ENCODE measurements at regions of chr15 and their contacts with region 1.

Region 1: DNA sequence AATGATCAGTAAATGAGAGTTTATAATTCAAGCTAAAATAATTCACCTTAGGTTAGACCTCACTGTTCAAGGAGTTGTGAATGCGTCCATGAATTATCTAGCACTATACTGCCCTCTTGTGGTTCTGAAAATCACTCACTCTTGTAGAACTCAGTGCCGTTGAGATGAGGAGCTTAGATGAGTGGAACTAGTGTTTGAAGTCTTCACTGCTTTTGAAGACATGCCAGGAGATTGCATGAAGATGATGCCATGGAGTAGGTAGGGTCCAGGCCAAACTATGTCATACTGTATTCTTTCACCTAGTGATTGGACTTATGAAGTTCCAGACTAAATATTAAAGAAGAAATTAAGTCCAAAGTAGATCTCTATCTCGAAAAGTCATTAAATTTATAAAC is 28.8 kb downstream of the LYSMD4 start:
- DNase-seq: no peak
- H3K4me3 ChIP-seq: no peak overlapping the region
- CTCF ChIP-seq: peak; percentile 60

Region 2: GRCh38 chr15:99250494-99251435 is 453.7 kb before region 1 on chr15:
- CTCF ChIA-PET with region 1: interaction called, 15 read pairs
- POLR2A ChIA-PET with region 1: interaction called, 3 read pairs
- DNase-seq: peak; percentile 88
- H3K4me3 ChIP-seq: peak overlapping the region; percentile 86
- CTCF ChIP-seq: no peak

Region 3: DNA sequence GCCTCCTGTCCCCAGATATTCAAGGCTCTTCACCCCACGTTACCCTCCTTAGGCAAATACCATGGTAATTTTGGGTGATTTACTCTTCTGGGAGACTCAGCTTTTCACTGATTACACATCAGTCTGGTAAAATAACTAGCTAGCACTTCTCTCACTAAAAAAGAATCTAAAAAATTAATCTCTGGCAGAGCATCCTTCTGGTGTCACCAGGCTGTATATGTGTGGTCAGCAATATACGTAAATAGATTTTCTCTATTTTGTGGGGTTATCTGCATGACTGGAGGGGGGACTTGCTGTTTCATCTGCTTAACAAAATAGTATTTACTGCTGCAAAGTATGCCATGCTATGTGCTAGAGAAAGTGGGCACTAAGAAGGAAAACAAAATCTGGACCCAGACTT is 408.1 kb before region 1 on chr15:
- CTCF ChIA-PET with region 1: interaction called, 20 read pairs
- POLR2A ChIA-PET with region 1: no interaction called
- DNase-seq: no peak
- H3K4me3 ChIP-seq: no peak overlapping the region
- CTCF ChIP-seq: no peak

Region 4: GRCh38 chr15:99341786-99342185 is 362.7 kb before region 1 on chr15:
- CTCF ChIA-PET with region 1: interaction called, 25 read pairs
- POLR2A ChIA-PET with region 1: no interaction called
- DNase-seq: no peak
- H3K4me3 ChIP-seq: no peak overlapping the region
- CTCF ChIP-seq: no peak

Region 5: GRCh38 chr15:99454941-99455788 is 249.3 kb before region 1 on chr15:
- CTCF ChIA-PET with region 1: interaction called, 17 read pairs
- POLR2A ChIA-PET with region 1: no interaction called
- DNase-seq: peak; percentile 68
- H3K4me3 ChIP-seq: no peak overlapping the region; the same call in 1 of the 2 replicates
- CTCF ChIP-seq: no peak

Region 6: DNA sequence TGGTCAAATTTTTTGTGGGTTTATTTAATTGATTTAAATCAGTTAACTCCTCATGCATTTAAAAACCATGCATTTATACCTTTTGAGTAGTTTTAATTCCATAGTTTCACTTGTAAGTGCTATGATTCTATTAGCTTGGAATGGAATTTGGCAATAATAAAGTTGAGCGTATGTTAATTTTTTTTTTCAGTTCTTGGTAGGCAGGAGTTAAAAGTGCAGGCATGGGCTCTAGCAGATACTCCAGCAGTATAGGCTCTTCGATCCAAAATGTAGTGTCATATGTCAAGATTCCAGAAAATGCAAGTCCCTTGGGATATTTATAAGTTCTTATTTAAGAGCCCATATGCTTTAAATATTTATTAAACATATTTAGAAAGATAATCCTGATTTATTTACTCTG is 41.5 kb before region 1 on chr15:
- CTCF ChIA-PET with region 1: interaction called, 13 read pairs
- POLR2A ChIA-PET with region 1: no interaction called
- DNase-seq: no peak
- H3K4me3 ChIP-seq: no peak overlapping the region
- CTCF ChIP-seq: no peak

Region 7: GRCh38 chr15:99719096-99719541 is 14.7 kb after region 1 on chr15:
- CTCF ChIA-PET with region 1: interaction called, 47 read pairs
- POLR2A ChIA-PET with region 1: no interaction called
- DNase-seq: no peak
- H3K4me3 ChIP-seq: no peak overlapping the region
- CTCF ChIP-seq: no peak

Region 8: DNA sequence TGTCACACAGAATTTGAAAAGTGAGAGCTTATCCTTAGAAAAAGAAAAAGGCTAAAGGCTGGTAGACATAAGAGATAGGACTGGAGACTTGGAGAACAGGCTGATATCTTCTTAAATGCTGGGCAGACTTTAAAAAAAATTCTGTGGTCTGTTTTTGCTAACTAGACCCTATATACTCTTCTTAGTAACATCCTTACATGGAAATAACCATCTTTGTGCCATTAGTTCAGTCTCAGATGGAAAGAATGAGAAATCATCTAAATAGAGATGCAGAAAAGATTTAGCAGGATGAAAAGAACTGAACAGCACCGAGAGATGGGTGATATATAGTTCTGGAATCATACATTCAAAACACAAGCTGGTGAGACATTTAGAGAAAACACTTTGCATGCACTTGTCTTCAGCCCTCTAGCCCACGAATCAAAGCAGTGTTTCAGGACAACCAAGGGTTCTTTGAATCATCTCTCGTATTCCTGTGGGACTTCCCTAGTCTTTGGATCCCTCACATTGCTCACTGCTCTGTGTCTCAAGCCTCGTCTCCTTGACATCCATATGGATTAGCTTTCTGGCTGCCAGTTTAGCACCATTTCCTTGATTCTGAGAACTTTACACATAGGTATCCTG is 121.8 kb after region 1 on chr15:
- CTCF ChIA-PET with region 1: no interaction called
- POLR2A ChIA-PET with region 1: no interaction called
- DNase-seq: no peak
- H3K4me3 ChIP-seq: no peak overlapping the region
- CTCF ChIP-seq: no peak

Region 9: GRCh38 chr15:100043015-100043641 is 338.7 kb after region 1 on chr15:
- CTCF ChIA-PET with region 1: no interaction called
- POLR2A ChIA-PET with region 1: no interaction called
- DNase-seq: no peak
- H3K4me3 ChIP-seq: no peak overlapping the region
- CTCF ChIP-seq: no peak

Measured in AG04449 (cell line).